CD8-positive, alpha-beta T cell (primary cell): ENCODE measurements at regions of chr15 and their contacts with region 1.

Region 1: GRCh38 chr15:44066316-44066740 is 128.7 kb downstream of the FRMD5 start:
- DNase-seq: peak; percentile 8 to 68 (median 50)
- ATAC-seq: no peak
- H3K4me3 ChIP-seq: no peak overlapping the region
- H3K4me3 Mint-ChIP-seq: no peak overlapping the region
- H3K27ac ChIP-seq: no peak overlapping the region
- H3K27ac Mint-ChIP-seq: no peak overlapping the region
- H3K4me1 ChIP-seq: no peaks in the 10 kb centered on the region
- H3K4me1 Mint-ChIP-seq: peaks cover 2% of the 10 kb centered on the region
- H3K27me3 ChIP-seq: no peaks in the 10 kb centered on the region
- H3K27me3 Mint-ChIP-seq: peaks cover 20% of the 10 kb centered on the region
- CTCF ChIP-seq: peak; percentile 81

Region 2: DNA sequence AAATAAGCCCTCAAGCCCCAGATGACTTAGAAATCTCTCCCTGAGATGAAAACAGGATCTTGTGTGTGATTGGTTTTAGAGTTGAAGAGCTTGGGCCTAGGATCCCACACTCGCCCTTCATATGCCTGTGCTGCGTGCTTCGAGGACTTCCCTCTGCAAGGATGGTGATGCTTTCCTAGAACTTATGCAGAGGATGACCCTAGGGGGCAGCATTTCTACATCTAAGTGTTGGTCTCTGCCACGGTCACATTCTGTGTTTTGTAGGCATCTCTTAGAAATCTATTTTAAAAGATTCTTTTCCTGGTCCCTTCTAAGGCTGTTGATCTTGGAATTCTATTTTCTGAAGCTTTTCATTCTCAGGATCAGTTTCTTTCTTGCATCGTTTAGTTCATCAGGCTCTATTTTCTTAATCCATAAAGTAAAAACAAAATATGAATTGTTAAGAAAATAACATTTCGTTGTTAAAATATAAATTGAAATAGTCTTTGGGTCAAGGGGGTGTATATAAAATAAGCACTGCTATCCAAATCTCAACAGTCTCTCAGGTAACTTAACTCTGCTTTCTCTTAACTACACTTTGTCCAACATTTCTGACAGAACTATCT is 193.8 kb before region 1 on chr15:
- CTCF ChIA-PET with region 1: no interaction called
- POLR2A ChIA-PET with region 1: no interaction called
- intact Hi-C with region 1: loop called in 1 of 2 experiments (anchors 5 kb)
- DNase-seq: peak in 2 of 9 experiments; percentile 22 to 41
- ATAC-seq: no peak
- H3K4me3 ChIP-seq: no peak overlapping the region
- H3K4me3 Mint-ChIP-seq: no peak overlapping the region
- H3K27ac ChIP-seq: no peak overlapping the region
- H3K27ac Mint-ChIP-seq: no peak overlapping the region
- H3K4me1 ChIP-seq: no peaks in the 10 kb centered on the region
- H3K4me1 Mint-ChIP-seq: no peaks in the 10 kb centered on the region
- H3K27me3 ChIP-seq: no peaks in the 10 kb centered on the region
- H3K27me3 Mint-ChIP-seq: no peaks in the 10 kb centered on the region
- CTCF ChIP-seq: no peak

Region 3: DNA sequence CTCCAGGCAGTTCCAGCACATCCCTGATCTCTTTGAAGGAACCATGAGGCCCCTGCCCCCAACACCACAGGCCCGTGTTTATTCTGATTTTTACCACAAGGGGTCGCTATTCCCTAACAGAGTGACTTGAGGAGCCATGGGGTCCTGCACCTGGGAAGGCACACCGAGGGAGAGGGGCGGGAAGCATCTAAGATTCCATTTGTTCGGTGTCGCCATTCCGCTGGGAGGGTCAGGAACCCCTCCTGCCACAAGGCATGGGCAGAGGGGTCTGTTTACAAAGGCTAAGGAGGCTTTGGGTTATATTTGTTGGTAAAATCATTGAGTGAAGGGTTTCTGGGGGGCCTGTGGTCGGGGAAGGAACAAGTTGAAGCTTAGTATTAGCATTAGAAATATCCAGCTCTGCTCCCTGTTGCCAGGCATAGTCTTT is 162.5 kb before region 1 on chr15:
- CTCF ChIA-PET with region 1: interaction called, 8 read pairs
- POLR2A ChIA-PET with region 1: no interaction called
- intact Hi-C with region 1: loop called in 1 of 2 experiments (anchors 2 kb)
- DNase-seq: peak; percentile 6 to 67 (median 45)
- ATAC-seq: peak; percentile 61
- H3K4me3 ChIP-seq: no peak overlapping the region
- H3K4me3 Mint-ChIP-seq: no peak overlapping the region
- H3K27ac ChIP-seq: no peak overlapping the region
- H3K27ac Mint-ChIP-seq: no peak overlapping the region
- H3K4me1 ChIP-seq: peaks cover 4% of the 10 kb centered on the region
- H3K4me1 Mint-ChIP-seq: peaks cover 3% of the 10 kb centered on the region
- H3K27me3 ChIP-seq: no peaks in the 10 kb centered on the region
- H3K27me3 Mint-ChIP-seq: peaks cover 2% of the 10 kb centered on the region
- CTCF ChIP-seq: peak; percentile 62

Region 4: GRCh38 chr15:44195151-44195740 is 128.9 kb after region 1 on chr15 and contains the start of gene FRMD5:
- CTCF ChIA-PET with region 1: no interaction called
- POLR2A ChIA-PET with region 1: no interaction called
- intact Hi-C with region 1: no loop called
- DNase-seq: peak; percentile 71 to 92 (median 84)
- ATAC-seq: peak; percentile 97
- H3K4me3 ChIP-seq: peak within 1 kb of the TSS; percentile 49 to 76
- H3K4me3 Mint-ChIP-seq: peak within 1 kb of the TSS; percentile 90
- H3K27ac ChIP-seq: no peak within 1 kb of the TSS
- H3K27ac Mint-ChIP-seq: no peak within 1 kb of the TSS
- H3K4me1 ChIP-seq: peaks cover 16% of the 10 kb centered on the region
- H3K4me1 Mint-ChIP-seq: peaks cover 19% of the 10 kb centered on the region
- H3K27me3 ChIP-seq: peaks cover 14% of the 10 kb centered on the region in 2 experiments
- H3K27me3 Mint-ChIP-seq: peaks cover 58% of the 10 kb centered on the region
- CTCF ChIP-seq: no peak
- total RNA-seq, gene FRMD5: not detected